Heart right ventricle (tissue), 16 donors: ENCODE measurements at regions of chr9 and their contacts with region 1.

Region 1: DNA sequence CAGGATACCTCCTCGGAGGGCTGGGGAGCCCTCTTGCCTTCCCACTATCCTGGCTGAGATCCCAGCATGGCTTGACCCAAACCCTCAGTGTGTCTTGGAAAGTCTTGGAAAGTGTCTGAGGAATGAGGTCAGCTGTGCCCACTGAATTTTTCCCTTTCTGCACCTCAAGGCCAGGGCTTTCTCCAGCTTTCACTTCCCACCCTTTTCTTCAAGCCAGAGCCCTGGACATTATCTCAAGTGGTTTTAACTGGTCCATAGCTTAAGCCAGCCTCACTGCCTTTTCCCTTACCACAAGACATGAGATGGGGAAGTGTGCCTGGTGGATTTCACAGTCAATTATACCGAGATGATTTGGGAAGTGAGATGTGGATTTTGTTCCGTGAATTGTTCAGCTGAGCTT is 35.7 kb upstream of the LHX2 start:
- DNase-seq: no peak
- ATAC-seq: no peak
- H3K4me3 ChIP-seq: no peak overlapping the region
- H3K27ac ChIP-seq: no peak overlapping the region
- H3K4me1 ChIP-seq: no peaks in the 10 kb centered on the region
- H3K27me3 ChIP-seq: peaks cover 0 to 30% (median 18%) of the 10 kb centered on the region in 7 donors
- CTCF ChIP-seq: no peak

Region 2: DNA sequence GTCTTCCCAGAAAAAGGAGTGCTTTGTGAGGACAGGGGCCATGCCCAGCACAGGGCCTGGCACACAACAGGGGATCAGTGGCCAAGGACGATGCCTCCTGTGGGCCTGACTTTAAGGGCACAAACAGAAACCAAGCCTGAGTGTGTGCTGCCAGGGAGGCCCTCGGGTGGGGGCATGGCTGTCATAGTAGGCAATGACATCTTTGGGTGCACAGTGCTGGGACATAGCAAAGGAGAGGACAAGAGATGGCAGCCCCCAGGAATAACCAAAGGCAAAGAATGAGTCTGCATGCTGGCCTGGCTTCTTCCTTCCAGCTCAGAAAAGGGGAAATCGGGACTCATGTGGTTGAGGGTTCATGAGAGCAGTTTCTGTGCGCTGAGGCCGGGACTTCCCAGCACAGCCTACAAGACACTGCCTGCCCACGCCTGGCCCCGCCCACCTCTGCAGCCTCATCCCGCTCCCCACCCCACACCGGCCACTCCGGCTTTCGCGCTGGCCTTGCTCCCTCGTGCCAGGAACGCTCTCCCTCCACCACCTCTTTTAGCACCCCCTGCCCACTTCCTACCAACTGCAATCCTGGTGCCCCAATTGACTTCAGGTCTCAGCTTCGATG is 21.9 kb after region 1 on chr9:
- intact Hi-C with region 1: loop called in 2 of 10 experiments (anchors 2 kb)
- DNase-seq: peak; percentile 44 to 50
- ATAC-seq: peak; percentile 46 to 78 (median 65)
- H3K4me3 ChIP-seq: no peak overlapping the region
- H3K27ac ChIP-seq: peak overlapping the region in 1 of 10 donors; percentile 44
- H3K4me1 ChIP-seq: peaks cover 2 to 37% (median 26%) of the 10 kb centered on the region in 9 donors
- H3K27me3 ChIP-seq: peaks cover 22 to 87% (median 85%) of the 10 kb centered on the region in 7 donors
- CTCF ChIP-seq: no peak

Region 3: GRCh38 chr9:124110307-124110915 is 134.5 kb after region 1 on chr9:
- intact Hi-C with region 1: no loop called
- DNase-seq: peak; percentile 35 to 60
- ATAC-seq: peak in 5 of 8 donors; percentile 59 to 79 (median 76)
- H3K4me3 ChIP-seq: no peak overlapping the region
- H3K27ac ChIP-seq: no peak overlapping the region
- H3K4me1 ChIP-seq: no peaks in the 10 kb centered on the region
- H3K27me3 ChIP-seq: peaks cover 0 to 25% (median 14%) of the 10 kb centered on the region in 7 donors
- CTCF ChIP-seq: no peak

Region 4: GRCh38 chr9:124180557-124180956 is 204.7 kb after region 1 on chr9:
- intact Hi-C with region 1: no loop called
- DNase-seq: peak; percentile 17 to 40
- ATAC-seq: peak in 2 of 8 donors; percentile 7 to 27
- H3K4me3 ChIP-seq: no peak overlapping the region
- H3K27ac ChIP-seq: no peak overlapping the region
- H3K4me1 ChIP-seq: peaks cover 0 to 4% (median 0%) of the 10 kb centered on the region in 9 donors
- H3K27me3 ChIP-seq: peaks cover 0 to 52% (median 37%) of the 10 kb centered on the region in 7 donors
- CTCF ChIP-seq: no peak